Activated B cell treated with CpG ODN at 0.5 μM for 24 hours (primary cell): ENCODE measurements at regions of chr3 and their contacts with region 1.

Region 1: GRCh38 chr3:194472290-194472920 is 14.4 kb downstream of the ATP13A3 start:
- DNase-seq: no peak
- ATAC-seq: peak; percentile 91
- H3K4me3 Mint-ChIP-seq: no peak overlapping the region
- H3K27ac Mint-ChIP-seq: no peak overlapping the region
- H3K4me1 Mint-ChIP-seq: peaks cover 3% of the 10 kb centered on the region
- H3K27me3 Mint-ChIP-seq: no peaks in the 10 kb centered on the region
- CTCF ChIP-seq: peak; percentile 99

Region 2: GRCh38 chr3:194486540-194487288 is 14.3 kb after region 1 on chr3 and contains the start of gene ATP13A3:
- CTCF ChIA-PET with region 1: interaction called, 5 read pairs
- POLR2A ChIA-PET with region 1: no interaction called
- intact Hi-C with region 1: loop called (anchors 1 kb)
- DNase-seq: peak; percentile 86
- ATAC-seq: peak; percentile 75
- H3K4me3 Mint-ChIP-seq: peak within 1 kb of the TSS; percentile 91
- H3K27ac Mint-ChIP-seq: peak within 1 kb of the TSS; percentile 88
- H3K4me1 Mint-ChIP-seq: peaks cover 63% of the 10 kb centered on the region
- H3K27me3 Mint-ChIP-seq: no peaks in the 10 kb centered on the region
- CTCF ChIP-seq: no peak
- total RNA-seq, gene ATP13A3: 79.8 and 91.9 TPM in 2 replicates

Region 3: GRCh38 chr3:194514626-194515025 is 42.2 kb after region 1 on chr3:
- CTCF ChIA-PET with region 1: interaction called, 7 read pairs
- POLR2A ChIA-PET with region 1: interaction called, 3 read pairs
- intact Hi-C with region 1: loop called (anchors 1 kb)
- DNase-seq: no peak
- ATAC-seq: no peak
- H3K4me3 Mint-ChIP-seq: no peak overlapping the region
- H3K27ac Mint-ChIP-seq: no peak overlapping the region
- H3K4me1 Mint-ChIP-seq: no peaks in the 10 kb centered on the region
- H3K27me3 Mint-ChIP-seq: no peaks in the 10 kb centered on the region
- CTCF ChIP-seq: no peak

Region 4: DNA sequence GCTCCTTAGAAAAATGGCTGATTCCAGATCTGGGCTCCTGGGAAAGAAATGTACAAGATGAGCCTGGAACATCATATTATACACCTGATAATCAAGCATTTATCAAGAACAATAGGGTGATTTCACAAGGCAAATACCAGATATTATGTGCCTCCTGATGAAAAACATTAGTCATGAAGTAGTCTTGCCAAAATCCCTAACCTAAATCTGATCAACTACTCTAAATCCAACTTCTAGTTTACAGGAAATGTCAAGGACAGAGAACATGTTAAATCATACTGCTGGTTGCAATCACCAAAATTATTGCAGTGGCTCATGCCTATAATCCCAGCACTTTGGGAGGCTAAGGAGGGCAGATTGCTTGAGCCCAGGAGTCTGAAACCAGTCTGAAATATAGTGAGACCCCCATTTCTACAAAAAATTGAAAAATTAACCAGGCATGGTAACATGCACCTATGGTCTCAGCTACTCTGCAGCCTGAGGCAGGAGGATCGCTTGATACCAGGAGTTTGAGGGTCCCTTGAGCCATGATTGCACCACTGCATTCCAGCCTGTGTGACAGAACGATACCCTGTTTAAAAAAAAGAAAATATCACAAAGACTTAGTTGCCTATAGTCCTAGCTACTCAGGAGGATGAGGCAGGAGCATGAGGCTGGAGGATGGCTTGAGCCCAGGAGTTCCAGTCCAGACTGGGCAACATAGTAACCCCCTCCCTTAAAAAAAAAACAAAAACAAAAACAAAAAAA is 49.3 kb after region 1 on chr3:
- CTCF ChIA-PET with region 1: interaction called, 7 read pairs
- POLR2A ChIA-PET with region 1: no interaction called
- intact Hi-C with region 1: loop called (anchors 1 kb)
- DNase-seq: no peak
- ATAC-seq: no peak
- H3K4me3 Mint-ChIP-seq: no peak overlapping the region
- H3K27ac Mint-ChIP-seq: no peak overlapping the region
- H3K4me1 Mint-ChIP-seq: no peaks in the 10 kb centered on the region
- H3K27me3 Mint-ChIP-seq: no peaks in the 10 kb centered on the region
- CTCF ChIP-seq: no peak

Region 5: DNA sequence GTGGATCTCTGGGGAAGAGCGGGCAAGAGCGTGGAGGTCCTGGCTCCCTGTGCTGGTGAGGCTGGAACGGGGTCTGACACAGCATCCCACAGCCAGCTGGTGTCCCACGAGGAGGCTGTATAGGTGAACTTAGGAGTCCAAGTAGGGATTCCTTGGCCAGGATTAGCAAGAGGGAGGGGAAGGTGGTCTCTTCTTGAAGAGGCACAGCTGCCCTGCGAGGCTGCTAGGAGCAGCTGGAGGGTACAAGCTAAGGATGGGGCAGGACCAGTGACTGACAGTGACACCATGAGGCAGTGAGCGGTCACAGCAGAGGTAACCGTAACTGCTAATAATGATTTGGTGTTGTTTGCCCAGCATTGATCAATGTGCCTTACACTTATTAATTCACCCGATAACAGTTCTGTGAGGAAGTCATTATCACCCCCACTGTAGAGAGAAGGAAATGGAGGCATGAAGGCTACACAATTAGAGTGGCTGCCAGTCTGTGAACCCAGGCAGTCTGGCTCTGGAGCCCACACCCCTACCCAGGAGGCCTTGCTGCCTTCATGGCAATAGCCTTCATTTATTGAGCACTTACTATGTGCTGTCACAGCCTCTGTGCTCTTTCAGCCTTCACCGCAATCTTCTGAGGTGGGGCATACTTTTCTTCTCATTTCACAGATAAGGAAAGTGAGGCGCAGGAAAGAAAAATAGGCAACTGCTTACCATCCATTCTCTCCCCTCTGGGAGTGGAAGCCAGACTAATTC is 101.5 kb after region 1 on chr3:
- CTCF ChIA-PET with region 1: interaction called, 31 read pairs
- POLR2A ChIA-PET with region 1: no interaction called
- intact Hi-C with region 1: loop called (anchors 1 kb)
- DNase-seq: no peak
- ATAC-seq: peak; percentile 83
- H3K4me3 Mint-ChIP-seq: no peak overlapping the region
- H3K27ac Mint-ChIP-seq: no peak overlapping the region
- H3K4me1 Mint-ChIP-seq: peaks cover 8% of the 10 kb centered on the region
- H3K27me3 Mint-ChIP-seq: peaks cover 25% of the 10 kb centered on the region
- CTCF ChIP-seq: no peak

Region 6: GRCh38 chr3:194592798-194593752 is 120.7 kb after region 1 on chr3:
- CTCF ChIA-PET with region 1: interaction called, 93 read pairs
- POLR2A ChIA-PET with region 1: interaction called, 3 read pairs
- intact Hi-C with region 1: loop called (anchors 1 kb)
- DNase-seq: no peak
- ATAC-seq: peak; percentile 21
- H3K4me3 Mint-ChIP-seq: no peak overlapping the region
- H3K27ac Mint-ChIP-seq: no peak overlapping the region
- H3K4me1 Mint-ChIP-seq: peaks cover 19% of the 10 kb centered on the region
- H3K27me3 Mint-ChIP-seq: no peaks in the 10 kb centered on the region
- CTCF ChIP-seq: no peak

Region 7: GRCh38 chr3:194761384-194761783 is 289.0 kb after region 1 on chr3:
- CTCF ChIA-PET with region 1: no interaction called
- POLR2A ChIA-PET with region 1: no interaction called
- intact Hi-C with region 1: no loop called
- DNase-seq: no peak
- ATAC-seq: no peak
- H3K4me3 Mint-ChIP-seq: no peak overlapping the region
- H3K27ac Mint-ChIP-seq: no peak overlapping the region
- H3K4me1 Mint-ChIP-seq: peaks cover 2% of the 10 kb centered on the region
- H3K27me3 Mint-ChIP-seq: peaks cover 20% of the 10 kb centered on the region
- CTCF ChIP-seq: no peak